ENCODE measurements at regions of chr12 and their contacts with region 1.

Region 1: DNA sequence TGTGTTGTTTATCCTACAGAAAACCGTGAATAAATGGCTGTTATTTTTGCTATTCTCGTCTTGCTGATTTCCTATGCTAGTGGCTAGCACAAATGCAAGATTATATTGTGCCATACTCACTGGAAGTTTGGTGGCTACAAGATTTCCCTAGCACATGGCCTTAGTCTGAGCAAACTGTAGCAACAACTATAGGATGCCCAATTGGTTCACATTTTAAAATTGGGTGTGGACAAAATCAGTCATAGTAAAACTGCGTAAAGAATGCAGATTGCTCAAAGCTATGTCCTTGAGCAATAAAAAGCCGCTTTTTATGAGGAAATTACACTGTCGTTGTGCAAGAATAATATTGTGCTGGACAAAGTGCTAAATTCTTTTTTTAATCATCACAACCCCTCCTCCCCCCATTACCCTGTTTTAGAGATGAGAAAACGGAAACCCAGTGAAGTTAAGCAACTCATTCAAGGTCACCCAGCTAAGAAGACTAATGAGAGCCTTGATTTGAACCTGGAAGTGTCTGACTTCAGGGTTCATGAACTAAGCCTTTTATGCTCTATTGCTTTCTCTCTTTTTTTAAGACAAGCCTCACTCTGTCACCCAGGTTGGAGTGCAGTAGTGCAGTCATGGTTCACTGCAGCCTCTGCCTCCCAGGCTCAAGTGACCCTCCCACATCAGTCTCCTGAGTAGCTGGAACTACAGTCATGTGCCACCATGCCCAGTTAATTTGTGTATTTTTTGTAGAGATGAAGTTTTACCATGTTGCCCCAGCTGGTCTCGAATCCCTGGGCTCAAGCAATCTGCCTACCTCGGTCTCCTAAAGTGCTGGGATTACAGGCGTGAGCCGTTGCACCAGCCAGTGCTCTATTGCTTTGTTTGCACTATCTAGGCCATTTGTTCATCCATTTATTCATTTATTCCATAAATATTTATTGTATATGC is 73.6 kb downstream of the SRGAP1 start:
- DNase-seq: peak; percentile 83
- H3K4me3 ChIP-seq: peak overlapping the region in 1 of 3 experiments; percentile 15
- H3K27ac ChIP-seq: peak overlapping the region; percentile 89
- H3K4me1 ChIP-seq: peaks cover 56% of the 10 kb centered on the region
- H3K27me3 ChIP-seq: no peaks in the 10 kb centered on the region
- CTCF ChIP-seq: no peak
- POLR2A ChIP-seq: no peak

Region 2: DNA sequence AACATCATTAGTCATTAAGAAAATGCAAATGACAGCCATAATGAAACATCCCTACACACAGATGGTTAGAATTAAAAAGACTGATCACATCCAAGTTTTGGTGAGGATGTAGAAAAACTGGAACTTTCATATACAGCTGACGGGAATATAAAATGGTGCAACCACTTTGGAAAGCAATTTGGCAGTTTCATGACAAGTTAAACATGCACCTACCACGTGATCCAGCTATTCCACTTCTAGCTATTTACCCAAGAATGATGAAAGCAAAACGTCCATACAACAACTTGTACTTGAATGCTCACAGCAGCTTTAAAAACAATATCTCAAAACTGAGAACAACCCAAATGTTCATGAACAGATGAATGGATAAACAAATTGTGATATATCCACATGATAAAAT is 689.3 kb before region 1 on chr12:
- CTCF ChIA-PET with region 1: no interaction called
- POLR2A ChIA-PET with region 1: no interaction called
- dilution Hi-C with region 1: no loop called
- intact Hi-C with region 1: no loop called
- DNase-seq: no peak
- H3K4me3 ChIP-seq: no peak overlapping the region
- H3K27ac ChIP-seq: no peak overlapping the region
- H3K4me1 ChIP-seq: no peaks in the 10 kb centered on the region
- H3K27me3 ChIP-seq: no peaks in the 10 kb centered on the region
- CTCF ChIP-seq: no peak
- POLR2A ChIP-seq: no peak

Region 3: DNA sequence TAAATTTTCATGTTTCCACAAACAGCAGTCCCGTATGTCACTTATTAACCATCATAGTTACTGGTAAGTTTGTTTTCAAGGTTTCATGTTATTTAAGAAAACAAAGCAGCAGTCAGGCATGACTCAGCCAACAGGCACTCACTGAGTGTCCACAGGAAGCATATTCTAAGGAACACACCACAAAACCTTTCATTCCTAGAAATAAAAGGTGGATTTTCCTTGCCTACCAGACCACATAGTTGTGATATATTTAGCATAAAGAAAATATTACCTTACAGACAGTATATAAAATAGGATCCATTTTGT is 623.9 kb before region 1 on chr12:
- CTCF ChIA-PET with region 1: no interaction called
- POLR2A ChIA-PET with region 1: no interaction called
- dilution Hi-C with region 1: no loop called
- intact Hi-C with region 1: loop called (anchors 5 kb)
- DNase-seq: peak; percentile 92
- H3K4me3 ChIP-seq: no peak overlapping the region
- H3K27ac ChIP-seq: peak overlapping the region; percentile 93
- H3K4me1 ChIP-seq: peaks cover 22% of the 10 kb centered on the region
- H3K27me3 ChIP-seq: peaks cover 0 to 3% of the 10 kb centered on the region in 2 experiments
- CTCF ChIP-seq: no peak
- POLR2A ChIP-seq: no peak

Region 4: DNA sequence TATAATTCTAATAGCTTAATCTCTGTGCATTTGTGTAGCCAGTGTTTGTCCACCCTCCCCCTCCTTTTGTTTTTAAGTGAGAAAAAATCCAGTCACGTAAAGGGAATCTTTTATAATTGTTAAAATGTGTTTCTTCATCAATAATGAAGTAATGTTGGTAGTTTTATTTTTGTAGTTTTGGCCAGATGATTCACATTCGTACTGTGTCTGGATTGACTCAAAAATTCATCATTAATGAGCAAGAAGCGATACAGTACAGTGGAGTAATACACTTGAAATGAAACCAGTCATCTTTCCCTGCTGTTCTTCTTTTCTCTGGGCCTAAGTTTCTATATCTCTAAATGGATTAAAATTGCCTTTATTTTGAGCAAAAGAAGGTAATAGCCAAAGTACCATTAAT is 12.8 kb after region 1 on chr12:
- CTCF ChIA-PET with region 1: interaction called, 10 read pairs
- POLR2A ChIA-PET with region 1: no interaction called
- dilution Hi-C with region 1: no loop called
- intact Hi-C with region 1: no loop called
- DNase-seq: no peak
- H3K4me3 ChIP-seq: no peak overlapping the region
- H3K27ac ChIP-seq: no peak overlapping the region
- H3K4me1 ChIP-seq: peaks cover 13% of the 10 kb centered on the region
- H3K27me3 ChIP-seq: no peaks in the 10 kb centered on the region
- CTCF ChIP-seq: no peak
- POLR2A ChIP-seq: no peak

Region 5: GRCh38 chr12:64088431-64089349 is 170.6 kb after region 1 on chr12:
- CTCF ChIA-PET with region 1: no interaction called
- POLR2A ChIA-PET with region 1: no interaction called
- dilution Hi-C with region 1: no loop called
- intact Hi-C with region 1: loop called (anchors 1 kb)
- DNase-seq: peak; percentile 92
- H3K4me3 ChIP-seq: peak overlapping the region in 2 of 3 experiments; percentile 7 to 52
- H3K27ac ChIP-seq: peak overlapping the region; percentile 71
- H3K4me1 ChIP-seq: peaks cover 18% of the 10 kb centered on the region
- H3K27me3 ChIP-seq: no peaks in the 10 kb centered on the region
- CTCF ChIP-seq: no peak
- POLR2A ChIP-seq: peak; percentile 73

Region 6: DNA sequence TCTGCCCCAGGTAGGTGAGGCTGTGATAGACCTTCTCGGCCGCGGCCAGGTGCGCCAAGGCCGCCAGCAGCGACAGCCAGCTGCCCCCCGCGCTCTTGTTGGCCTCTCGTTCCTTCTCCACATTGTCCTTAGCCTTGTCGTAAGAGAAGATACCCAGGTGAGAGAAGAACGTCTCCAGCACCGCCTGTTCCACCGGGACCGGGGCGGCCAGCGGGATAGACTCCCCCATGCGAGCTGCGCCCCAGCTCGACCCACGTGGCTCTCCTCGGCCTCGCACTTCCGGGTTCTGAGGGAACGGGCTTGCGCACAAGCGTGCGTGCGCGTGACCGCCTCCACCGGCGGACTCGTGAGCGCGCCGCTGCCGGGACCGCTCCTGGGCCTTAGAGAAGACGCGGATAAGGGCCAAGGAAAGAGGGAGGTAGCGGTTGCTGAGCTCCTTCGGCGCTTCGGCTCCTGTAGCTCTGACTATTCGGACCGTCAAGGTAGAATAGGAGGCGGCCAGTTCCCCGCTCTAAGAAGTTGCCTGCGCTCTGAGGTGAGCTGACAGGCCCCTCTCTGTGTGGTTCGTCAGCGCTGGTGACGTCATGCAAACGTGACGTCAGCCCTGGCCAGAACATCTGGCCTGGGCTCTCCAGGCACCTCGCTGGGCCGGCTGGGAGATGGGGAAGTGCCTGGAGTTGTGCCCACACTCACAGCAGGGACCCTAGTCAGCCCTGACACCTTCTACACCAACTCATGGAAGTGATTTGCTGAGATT is 304.1 kb after region 1 on chr12 and contains the start of gene KICS2:
- CTCF ChIA-PET with region 1: no interaction called
- POLR2A ChIA-PET with region 1: interaction called, 11 read pairs
- dilution Hi-C with region 1: no loop called
- intact Hi-C with region 1: loop called (anchors 1 kb)
- DNase-seq: peak; percentile 95
- H3K4me3 ChIP-seq: peak within 1 kb of the TSS; percentile 50 to 80 (median 67)
- H3K27ac ChIP-seq: peak within 1 kb of the TSS; percentile 80
- H3K4me1 ChIP-seq: peaks cover 7% of the 10 kb centered on the region
- H3K27me3 ChIP-seq: no peaks in the 10 kb centered on the region
- CTCF ChIP-seq: no peak
- POLR2A ChIP-seq: peak; percentile 67
- total RNA-seq, gene KICS2: 3.2 and 3.8 TPM in 2 replicates

Measured in endothelial cell of umbilical vein (primary cell).